H1 (cell line): ENCODE measurements at regions of chr12 and their contacts with region 1.

Region 1: GRCh38 chr12:109648521-109648920 is 65.1 kb upstream of the FAM222A start:
- DNase-seq: no peak
- H3K4me3 ChIP-seq: no peak overlapping the region
- H3K27ac ChIP-seq: no peak overlapping the region
- H3K4me1 ChIP-seq: peaks cover 0 to 5% (median 0%) of the 10 kb centered on the region in 4 experiments; a peak in 1 of 7 replicates
- H3K27me3 ChIP-seq: no peaks in the 10 kb centered on the region
- CTCF ChIP-seq: no peak
- EP300 ChIP-seq: no peak
- POLR2A ChIP-seq: no peak
- RAD21 ChIP-seq: no peak

Region 2: DNA sequence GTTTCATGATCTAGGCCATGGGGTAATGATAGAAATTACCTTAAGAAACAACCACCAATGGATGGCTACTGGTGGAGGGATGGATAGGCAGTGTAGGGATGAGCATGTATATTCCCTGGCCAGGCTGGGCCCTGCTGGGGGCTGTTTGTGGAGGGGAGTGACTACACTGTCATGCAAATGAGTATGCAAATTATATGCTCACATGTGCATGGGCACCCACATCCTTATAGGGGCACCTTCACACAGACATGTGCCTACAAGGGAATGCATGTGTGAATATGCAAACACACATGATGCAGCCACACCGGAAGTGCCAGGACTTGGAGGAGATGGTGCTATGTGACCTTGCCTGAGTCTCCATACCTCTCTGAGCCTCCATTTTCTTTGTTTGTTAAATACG is 25.4 kb after region 1 on chr12:
- CTCF ChIA-PET with region 1: interaction called, 10 read pairs
- POLR2A ChIA-PET with region 1: interaction called, 3 read pairs
- DNase-seq: no peak
- H3K4me3 ChIP-seq: no peak overlapping the region
- H3K27ac ChIP-seq: no peak overlapping the region
- H3K4me1 ChIP-seq: peaks cover 0 to 3% (median 1%) of the 10 kb centered on the region in 4 experiments; a peak in 1 of 7 replicates
- H3K27me3 ChIP-seq: peaks cover 0 to 7% (median under 1%) of the 10 kb centered on the region in 4 experiments; a peak in 3 of 7 replicates
- CTCF ChIP-seq: no peak
- EP300 ChIP-seq: no peak
- POLR2A ChIP-seq: no peak
- RAD21 ChIP-seq: no peak